CD14-positive monocyte (primary cell): ENCODE measurements at regions of chr1 and their contacts with region 1.

Region 1: GRCh38 chr1:227762233-227762911 is 27.1 kb downstream of the SNAP47 start:
- DNase-seq: peak; percentile 24 to 49 (median 38)
- H3K4me3 ChIP-seq: no peak overlapping the region
- H3K4me3 Mint-ChIP-seq: no peak overlapping the region
- H3K27ac ChIP-seq: no peak overlapping the region
- H3K27ac Mint-ChIP-seq: no peak overlapping the region
- H3K4me1 ChIP-seq: peaks cover 0 to 13% of the 10 kb centered on the region in 2 donors
- H3K4me1 Mint-ChIP-seq: peaks cover 21% of the 10 kb centered on the region
- H3K27me3 ChIP-seq: no peaks in the 10 kb centered on the region
- H3K27me3 Mint-ChIP-seq: no peaks in the 10 kb centered on the region
- CTCF ChIP-seq: peak; percentile 84

Region 2: GRCh38 chr1:227685807-227686206 is 76.6 kb before region 1 on chr1:
- intact Hi-C with region 1: no loop called
- DNase-seq: no peak
- H3K4me3 ChIP-seq: no peak overlapping the region
- H3K4me3 Mint-ChIP-seq: no peak overlapping the region
- H3K27ac ChIP-seq: no peak overlapping the region
- H3K27ac Mint-ChIP-seq: no peak overlapping the region
- H3K4me1 ChIP-seq: no peaks in the 10 kb centered on the region
- H3K4me1 Mint-ChIP-seq: no peaks in the 10 kb centered on the region
- H3K27me3 ChIP-seq: no peaks in the 10 kb centered on the region
- H3K27me3 Mint-ChIP-seq: no peaks in the 10 kb centered on the region
- CTCF ChIP-seq: no peak

Region 3: GRCh38 chr1:227805606-227806197 is 43.3 kb after region 1 on chr1:
- intact Hi-C with region 1: no loop called
- DNase-seq: no peak
- H3K4me3 ChIP-seq: no peak overlapping the region
- H3K4me3 Mint-ChIP-seq: no peak overlapping the region
- H3K27ac ChIP-seq: no peak overlapping the region
- H3K27ac Mint-ChIP-seq: no peak overlapping the region
- H3K4me1 ChIP-seq: no peaks in the 10 kb centered on the region
- H3K4me1 Mint-ChIP-seq: no peaks in the 10 kb centered on the region
- H3K27me3 ChIP-seq: no peaks in the 10 kb centered on the region
- H3K27me3 Mint-ChIP-seq: peaks cover 0 to 4% (median 4%) of the 10 kb centered on the region in 3 donors
- CTCF ChIP-seq: no peak

Region 4: GRCh38 chr1:227946624-227947385 is 184.4 kb after region 1 on chr1:
- intact Hi-C with region 1: loop called (anchors 5 kb)
- DNase-seq: no peak
- H3K4me3 ChIP-seq: peak overlapping the region in 1 of 3 experiments; percentile 30
- H3K4me3 Mint-ChIP-seq: peak overlapping the region in 1 of 2 donors; percentile 81
- H3K27ac ChIP-seq: no peak overlapping the region
- H3K27ac Mint-ChIP-seq: no peak overlapping the region
- H3K4me1 ChIP-seq: peaks cover 0 to 10% of the 10 kb centered on the region in 2 donors
- H3K4me1 Mint-ChIP-seq: peaks cover 9% of the 10 kb centered on the region
- H3K27me3 ChIP-seq: peaks cover 9 to 45% of the 10 kb centered on the region in 2 donors
- H3K27me3 Mint-ChIP-seq: peaks cover 36 to 51% (median 48%) of the 10 kb centered on the region in 3 donors
- CTCF ChIP-seq: peak; percentile 38

Region 5: GRCh38 chr1:228059634-228060457 is 297.5 kb after region 1 on chr1:
- intact Hi-C with region 1: loop called in 1 of 2 experiments (anchors 10 kb)
- DNase-seq: peak in 2 of 3 donors; percentile 12
- H3K4me3 ChIP-seq: peak overlapping the region; percentile 33 to 77 (median 36)
- H3K4me3 Mint-ChIP-seq: peak overlapping the region; percentile 74
- H3K27ac ChIP-seq: no peak overlapping the region
- H3K27ac Mint-ChIP-seq: peak overlapping the region in 1 of 7 donors; percentile 41
- H3K4me1 ChIP-seq: peaks cover 17 to 22% of the 10 kb centered on the region in 2 donors
- H3K4me1 Mint-ChIP-seq: peaks cover 11% of the 10 kb centered on the region
- H3K27me3 ChIP-seq: peaks cover 38 to 68% of the 10 kb centered on the region in 2 donors
- H3K27me3 Mint-ChIP-seq: peaks cover 55 to 72% (median 65%) of the 10 kb centered on the region in 3 donors
- CTCF ChIP-seq: no peak